CD8-positive, alpha-beta T cell (primary cell): ENCODE measurements at regions of chr2 and their contacts with region 1.

Region 1: DNA sequence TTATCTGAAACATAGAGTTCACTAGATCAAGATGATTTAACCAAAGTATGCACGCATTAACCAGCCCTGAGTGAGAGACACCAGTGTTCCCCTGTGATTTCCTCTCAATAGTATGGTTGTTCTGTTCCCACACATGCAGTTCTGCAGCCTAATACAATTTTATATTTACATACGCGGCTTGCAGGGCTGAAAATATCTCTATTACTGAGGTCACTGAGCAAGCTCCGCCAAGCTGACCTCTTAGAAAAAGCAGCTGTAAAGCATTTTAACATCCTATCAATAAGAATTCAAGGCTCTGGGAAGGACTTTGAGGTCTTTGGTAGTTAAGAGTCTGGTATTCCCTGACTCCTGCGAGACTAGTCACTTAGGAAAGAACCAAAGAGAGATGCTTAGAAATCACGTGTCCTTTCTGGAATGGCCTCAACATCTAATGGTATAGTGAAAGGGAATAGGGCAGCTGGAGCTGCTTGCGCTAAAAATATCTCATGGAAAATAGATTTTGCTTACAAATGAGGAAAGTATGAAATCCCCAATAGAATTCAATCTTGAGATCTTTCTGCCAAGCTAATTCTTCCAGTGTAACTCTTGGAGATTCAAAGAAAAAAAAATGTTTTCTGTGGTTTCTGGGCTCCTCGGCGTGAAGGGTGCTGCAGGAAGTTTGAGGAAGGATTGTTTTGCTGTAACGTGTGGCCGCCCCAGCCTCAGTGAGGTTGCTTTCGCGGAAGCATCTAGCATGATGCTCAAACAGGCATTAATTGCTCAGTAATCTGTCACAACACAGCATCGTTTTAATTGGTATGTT is 59.2 kb downstream of the DOCK10 start:
- DNase-seq: peak in 8 of 9 experiments; percentile 34 to 77 (median 52)
- ATAC-seq: peak; percentile 45
- H3K4me3 ChIP-seq: no peak overlapping the region
- H3K4me3 Mint-ChIP-seq: peak overlapping the region; percentile 65
- H3K27ac ChIP-seq: peak overlapping the region; percentile 43 to 69
- H3K27ac Mint-ChIP-seq: peak overlapping the region; percentile 91
- H3K4me1 ChIP-seq: peaks cover 63% of the 10 kb centered on the region
- H3K4me1 Mint-ChIP-seq: peaks cover 81% of the 10 kb centered on the region
- H3K27me3 ChIP-seq: no peaks in the 10 kb centered on the region
- H3K27me3 Mint-ChIP-seq: no peaks in the 10 kb centered on the region
- CTCF ChIP-seq: no peak

Region 2: DNA sequence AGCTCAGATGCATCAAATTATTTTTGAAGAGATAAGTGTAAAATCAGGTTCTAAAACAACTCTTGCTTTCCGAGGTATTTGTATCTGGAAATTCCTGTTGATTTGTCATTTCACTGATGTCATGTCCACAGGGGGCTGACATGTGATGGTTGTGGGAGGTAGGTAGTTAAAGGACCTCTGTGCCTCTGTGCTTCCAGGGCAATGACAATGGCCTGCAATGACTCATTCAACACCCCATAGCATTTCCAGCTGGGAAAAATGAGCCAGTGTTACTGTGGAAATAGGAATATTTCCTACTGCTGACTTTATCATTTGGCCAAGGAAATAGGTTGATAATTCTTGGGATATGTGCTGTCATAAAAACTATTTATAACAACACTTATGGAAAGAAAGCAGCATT is 180.7 kb before region 1 on chr2:
- CTCF ChIA-PET with region 1: no interaction called
- POLR2A ChIA-PET with region 1: no interaction called
- intact Hi-C with region 1: no loop called
- DNase-seq: no peak
- ATAC-seq: no peak
- H3K4me3 ChIP-seq: no peak overlapping the region
- H3K4me3 Mint-ChIP-seq: no peak overlapping the region
- H3K27ac ChIP-seq: no peak overlapping the region
- H3K27ac Mint-ChIP-seq: peak overlapping the region; percentile 10
- H3K4me1 ChIP-seq: no peaks in the 10 kb centered on the region
- H3K4me1 Mint-ChIP-seq: no peaks in the 10 kb centered on the region
- H3K27me3 ChIP-seq: no peaks in the 10 kb centered on the region
- H3K27me3 Mint-ChIP-seq: no peaks in the 10 kb centered on the region
- CTCF ChIP-seq: no peak

Region 3: DNA sequence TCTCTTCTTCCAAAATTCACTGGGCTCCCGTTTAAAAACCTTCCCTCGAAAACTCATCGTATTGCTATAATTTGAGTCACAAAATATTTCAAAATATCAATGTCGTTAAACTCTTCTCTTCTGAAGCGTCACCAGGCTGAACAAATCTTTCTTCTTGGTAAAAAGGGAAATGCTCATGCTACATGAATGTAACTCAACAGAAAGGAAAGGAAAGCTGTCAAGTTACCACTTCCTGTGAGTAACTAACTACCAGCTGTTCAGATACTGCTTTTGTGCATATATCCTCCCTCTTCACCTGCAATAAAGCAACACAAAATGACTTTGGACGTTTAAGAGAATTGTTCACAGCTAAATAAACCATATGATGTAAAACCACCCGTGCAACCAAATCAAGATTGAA is 36.2 kb before region 1 on chr2:
- CTCF ChIA-PET with region 1: interaction called, 10 read pairs
- POLR2A ChIA-PET with region 1: interaction called, 6 read pairs
- intact Hi-C with region 1: loop called (anchors 1 to 5 kb)
- DNase-seq: peak in 2 of 9 experiments; percentile 64 to 84
- ATAC-seq: peak; percentile 78
- H3K4me3 ChIP-seq: peak overlapping the region; percentile 59 to 76
- H3K4me3 Mint-ChIP-seq: peak overlapping the region; percentile 89
- H3K27ac ChIP-seq: peak overlapping the region; percentile 72 to 81
- H3K27ac Mint-ChIP-seq: peak overlapping the region; percentile 97
- H3K4me1 ChIP-seq: peaks cover 73% of the 10 kb centered on the region
- H3K4me1 Mint-ChIP-seq: peaks cover 76% of the 10 kb centered on the region
- H3K27me3 ChIP-seq: no peaks in the 10 kb centered on the region
- H3K27me3 Mint-ChIP-seq: no peaks in the 10 kb centered on the region
- CTCF ChIP-seq: no peak

Region 4: DNA sequence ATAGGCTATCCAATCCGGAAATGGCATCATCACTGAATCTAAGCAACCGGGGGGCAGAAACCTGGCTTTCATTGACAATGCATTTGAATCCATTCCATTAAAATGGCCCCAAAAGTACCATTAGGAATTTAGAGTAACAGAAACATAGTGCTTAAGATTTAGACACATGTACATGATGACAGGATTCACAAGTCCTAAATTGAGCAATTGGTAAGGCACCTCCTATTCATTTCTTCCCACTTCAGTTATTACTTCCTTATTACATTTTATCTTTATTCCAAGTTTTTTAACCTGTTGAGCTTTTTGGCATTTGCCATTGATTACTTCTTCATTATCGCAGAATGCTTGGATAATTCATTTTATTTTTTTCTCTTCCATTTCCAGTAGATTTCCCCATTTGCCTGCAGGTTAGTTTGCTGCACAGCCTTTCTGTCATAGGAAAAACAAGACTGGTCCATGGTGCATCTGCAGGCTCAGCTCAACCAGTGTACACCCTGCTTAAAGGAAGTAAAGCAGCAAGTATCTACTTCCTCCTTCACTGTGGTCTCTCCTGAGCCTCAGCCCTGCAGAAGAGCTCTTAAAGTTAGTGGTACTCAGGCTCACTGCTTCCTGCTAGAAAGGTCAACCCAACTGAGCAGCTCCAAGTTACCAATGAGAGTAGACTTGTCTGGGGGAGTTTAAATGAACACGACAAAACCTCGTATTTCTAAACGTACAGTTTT is 30.0 kb before region 1 on chr2:
- CTCF ChIA-PET with region 1: interaction called, 10 read pairs
- POLR2A ChIA-PET with region 1: interaction called, 4 read pairs
- intact Hi-C with region 1: loop called in 1 of 2 experiments (anchors 5 kb)
- DNase-seq: peak in 8 of 9 experiments; percentile 31 to 76 (median 53)
- ATAC-seq: peak; percentile 95
- H3K4me3 ChIP-seq: no peak overlapping the region
- H3K4me3 Mint-ChIP-seq: peak overlapping the region; percentile 36
- H3K27ac ChIP-seq: peak overlapping the region in 1 of 2 experiments; percentile 44
- H3K27ac Mint-ChIP-seq: peak overlapping the region; percentile 92
- H3K4me1 ChIP-seq: peaks cover 75% of the 10 kb centered on the region
- H3K4me1 Mint-ChIP-seq: peaks cover 84% of the 10 kb centered on the region
- H3K27me3 ChIP-seq: no peaks in the 10 kb centered on the region
- H3K27me3 Mint-ChIP-seq: no peaks in the 10 kb centered on the region
- CTCF ChIP-seq: no peak

Region 5: GRCh38 chr2:225013425-225014365 is 30.6 kb after region 1 on chr2:
- CTCF ChIA-PET with region 1: no interaction called
- POLR2A ChIA-PET with region 1: no interaction called
- intact Hi-C with region 1: no loop called
- DNase-seq: peak in 1 of 9 experiments; percentile 55
- ATAC-seq: no peak
- H3K4me3 ChIP-seq: no peak overlapping the region
- H3K4me3 Mint-ChIP-seq: no peak overlapping the region
- H3K27ac ChIP-seq: no peak overlapping the region
- H3K27ac Mint-ChIP-seq: peak overlapping the region; percentile 52
- H3K4me1 ChIP-seq: peaks cover 28% of the 10 kb centered on the region
- H3K4me1 Mint-ChIP-seq: peaks cover 79% of the 10 kb centered on the region
- H3K27me3 ChIP-seq: no peaks in the 10 kb centered on the region
- H3K27me3 Mint-ChIP-seq: no peaks in the 10 kb centered on the region
- CTCF ChIP-seq: no peak